GM12878 (cell line): ENCODE measurements at regions of chr3 and their contacts with region 1.

Region 1: GRCh38 chr3:150567328-150567727 is 20.7 kb downstream of the EIF2A start:
- DNase-seq: no peak
- ATAC-seq: peak; percentile 31; the same call in 1 of the 3 replicates
- H3K4me3 ChIP-seq: no peak overlapping the region
- H3K27ac ChIP-seq: no peak overlapping the region
- H3K4me1 ChIP-seq: no peaks in the 10 kb centered on the region
- H3K27me3 ChIP-seq: no peaks in the 10 kb centered on the region
- CTCF ChIP-seq: no peak
- EP300 ChIP-seq: no peak
- POLR2A ChIP-seq: no peak
- RAD21 ChIP-seq: no peak

Region 2: DNA sequence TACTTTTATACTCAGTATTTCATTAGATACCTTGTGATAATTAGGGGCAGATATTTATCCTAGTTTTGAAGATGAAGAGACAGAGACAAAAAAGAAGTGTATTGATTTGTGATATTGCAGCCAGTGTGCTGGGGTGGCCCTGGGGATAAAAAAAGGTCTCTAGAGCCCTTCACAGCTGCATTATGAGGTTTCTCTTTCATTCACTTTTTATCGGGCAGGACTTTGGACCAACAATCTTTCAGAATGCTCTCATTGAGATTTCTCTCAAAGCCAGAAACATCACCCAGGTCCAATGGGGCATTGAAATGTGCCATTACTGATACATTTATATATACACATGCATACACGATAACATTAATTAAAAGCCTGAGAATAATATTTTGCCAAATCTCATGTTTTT is 15.3 kb after region 1 on chr3:
- CTCF ChIA-PET with region 1: interaction called, 3 read pairs
- POLR2A ChIA-PET with region 1: no interaction called
- RAD21 ChIA-PET with region 1: no interaction called
- SMC1A ChIA-PET with region 1: interaction called, 29 read pairs
- in situ Hi-C with region 1: no loop called
- intact Hi-C with region 1: no loop called
- DNase-seq: no peak
- ATAC-seq: peak; percentile 89
- H3K4me3 ChIP-seq: no peak overlapping the region
- H3K27ac ChIP-seq: peak overlapping the region; percentile 88
- H3K4me1 ChIP-seq: peaks cover 12% of the 10 kb centered on the region
- H3K27me3 ChIP-seq: no peaks in the 10 kb centered on the region
- CTCF ChIP-seq: no peak
- EP300 ChIP-seq: no peak
- POLR2A ChIP-seq: no peak
- RAD21 ChIP-seq: no peak